H1 (cell line): ENCODE measurements at regions of chr13 and their contacts with region 1.

Region 1: GRCh38 chr13:69565334-69565733 is 542.3 kb upstream of the ATXN8OS start:
- DNase-seq: no peak
- H3K4me3 ChIP-seq: no peak overlapping the region
- H3K27ac ChIP-seq: no peak overlapping the region
- H3K4me1 ChIP-seq: no peaks in the 10 kb centered on the region
- H3K27me3 ChIP-seq: no peaks in the 10 kb centered on the region
- CTCF ChIP-seq: peak; percentile 17 to 70 (median 54)
- EP300 ChIP-seq: no peak
- POLR2A ChIP-seq: no peak
- RAD21 ChIP-seq: peak; percentile 47 to 62

Region 2: DNA sequence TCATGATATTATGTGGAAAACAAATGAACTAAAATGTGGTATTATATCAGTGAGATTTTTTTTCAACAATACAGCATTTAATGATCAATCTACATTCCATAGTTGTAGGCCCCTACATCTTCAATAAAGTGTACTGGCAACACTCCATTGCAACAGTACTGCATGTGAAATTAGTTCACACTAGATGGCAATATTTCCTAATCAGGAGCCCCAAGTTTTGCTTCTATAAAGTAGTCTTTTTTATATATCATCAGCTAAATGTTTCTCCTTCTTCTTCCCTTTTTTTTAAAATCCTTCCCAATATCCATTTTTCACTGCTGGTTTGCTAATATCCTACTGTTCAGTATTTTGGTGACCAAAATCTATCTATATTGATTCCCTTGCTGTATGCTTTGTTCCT is 14.0 kb after region 1 on chr13:
- CTCF ChIA-PET with region 1: interaction called, 30 read pairs
- POLR2A ChIA-PET with region 1: no interaction called
- DNase-seq: no peak
- H3K4me3 ChIP-seq: no peak overlapping the region
- H3K27ac ChIP-seq: no peak overlapping the region
- H3K4me1 ChIP-seq: peaks cover 0 to 6% (median 2%) of the 10 kb centered on the region in 4 experiments; a peak in 1 of 7 replicates
- H3K27me3 ChIP-seq: no peaks in the 10 kb centered on the region
- CTCF ChIP-seq: peak in 2 of 3 experiments; percentile 4 to 31; a peak in 2 of 4 replicates
- EP300 ChIP-seq: no peak
- POLR2A ChIP-seq: no peak
- RAD21 ChIP-seq: peak; percentile 47 to 56

Region 3: DNA sequence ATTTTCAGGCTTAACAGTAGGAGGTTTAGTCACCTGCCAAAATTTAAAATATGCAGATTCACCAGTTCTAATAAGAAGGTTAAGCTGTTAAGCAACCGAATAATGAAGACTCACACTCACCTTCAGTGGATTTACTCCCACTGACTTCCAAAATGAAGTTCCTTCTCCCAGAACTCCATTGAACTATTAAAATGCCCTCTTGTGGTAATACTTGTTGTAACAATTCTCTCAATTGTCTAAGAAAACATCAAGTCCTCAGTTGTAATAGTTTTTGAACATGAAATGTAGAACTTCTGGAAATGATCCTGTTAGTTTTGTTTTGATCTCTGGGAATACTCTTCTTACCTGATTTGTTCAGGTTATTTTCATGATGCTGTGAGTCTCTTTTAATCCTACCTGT is 20.3 kb after region 1 on chr13:
- CTCF ChIA-PET with region 1: interaction called, 30 read pairs
- POLR2A ChIA-PET with region 1: no interaction called
- DNase-seq: no peak
- H3K4me3 ChIP-seq: no peak overlapping the region
- H3K27ac ChIP-seq: no peak overlapping the region
- H3K4me1 ChIP-seq: no peaks in the 10 kb centered on the region
- H3K27me3 ChIP-seq: no peaks in the 10 kb centered on the region
- CTCF ChIP-seq: peak in 1 of 3 experiments; percentile 23; a peak in 1 of 4 replicates
- EP300 ChIP-seq: no peak
- POLR2A ChIP-seq: no peak
- RAD21 ChIP-seq: peak; percentile 10 to 14; a peak in 2 of 4 replicates

Region 4: DNA sequence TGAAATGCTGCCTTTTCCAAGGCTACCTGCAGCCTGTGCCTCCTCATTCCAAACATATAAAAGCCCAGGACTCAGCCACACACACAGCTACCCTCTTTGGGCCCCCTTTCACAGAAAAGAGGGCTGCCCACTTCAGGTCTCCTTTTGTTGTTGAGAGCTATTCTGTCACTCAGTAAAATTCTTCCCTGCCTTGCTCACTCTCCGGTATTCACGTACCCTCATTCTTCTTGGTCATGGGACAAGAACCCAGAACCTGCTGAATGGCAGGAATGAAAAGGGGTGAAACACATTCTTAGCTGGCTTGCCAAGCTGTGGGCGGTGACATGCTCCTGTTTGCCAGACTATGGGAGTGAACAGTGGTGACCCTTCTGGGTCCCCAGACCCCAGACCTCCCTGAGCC is 204.3 kb after region 1 on chr13:
- CTCF ChIA-PET with region 1: no interaction called
- POLR2A ChIA-PET with region 1: no interaction called
- DNase-seq: no peak
- H3K4me3 ChIP-seq: no peak overlapping the region
- H3K27ac ChIP-seq: no peak overlapping the region
- H3K4me1 ChIP-seq: no peaks in the 10 kb centered on the region
- H3K27me3 ChIP-seq: no peaks in the 10 kb centered on the region
- CTCF ChIP-seq: no peak
- EP300 ChIP-seq: no peak
- POLR2A ChIP-seq: no peak
- RAD21 ChIP-seq: no peak